Ascending aorta (tissue), 2 donors: ENCODE measurements at regions of chr4 and their contacts with region 1.

Region 1: DNA sequence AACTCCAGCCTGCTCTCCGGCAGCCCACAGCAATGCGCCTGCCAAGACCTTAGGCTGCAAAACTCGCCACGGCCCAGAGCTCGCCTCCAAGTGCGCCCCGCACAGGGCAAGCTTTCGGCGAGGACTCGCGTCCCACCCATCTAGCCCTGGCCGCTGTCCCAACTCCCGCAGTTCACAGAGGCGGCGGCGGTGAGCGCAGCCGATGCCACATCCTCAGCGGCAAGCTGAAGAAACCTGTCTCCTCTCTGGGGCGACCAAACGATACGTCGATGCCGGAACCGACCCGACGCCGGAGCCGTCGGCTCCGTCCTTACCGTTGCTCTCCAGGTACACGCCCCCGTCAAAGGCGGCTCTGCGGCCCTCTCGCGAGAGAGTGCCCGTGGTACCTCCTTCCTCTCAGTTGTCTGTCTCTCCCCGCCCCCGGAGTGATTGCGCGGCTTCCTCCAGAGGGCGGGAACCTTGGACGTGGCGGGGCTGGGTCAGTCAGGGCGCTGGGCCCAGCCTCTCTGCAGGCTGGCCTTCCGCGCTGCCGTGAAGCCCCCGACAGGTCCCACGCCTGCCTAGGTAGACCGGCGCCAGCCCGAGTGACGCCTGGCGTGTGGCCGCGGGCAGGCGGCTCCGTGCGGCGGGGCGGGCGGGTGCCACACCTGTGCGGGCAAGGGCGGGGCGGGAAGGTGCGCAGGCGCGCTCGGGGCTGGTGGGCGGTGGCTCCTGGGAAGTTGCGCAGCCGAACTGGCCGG is 380 bp upstream of the RAB33B start:
- DNase-seq: peak; percentile 95 to 99
- H3K4me3 ChIP-seq: peak overlapping the region; percentile 92 to 93
- H3K27ac ChIP-seq: peak overlapping the region; percentile 94 to 98
- H3K4me1 ChIP-seq: peaks cover 5 to 21% of the 10 kb centered on the region in 2 donors
- H3K27me3 ChIP-seq: no peaks in the 10 kb centered on the region
- CTCF ChIP-seq: peak in 2 of 3 experiments; percentile 4 to 28

Region 2: GRCh38 chr4:139015269-139015947 is 438.1 kb before region 1 on chr4 and contains the start of gene NOCT:
- intact Hi-C with region 1: loop called (anchors 5 kb)
- DNase-seq: peak; percentile 67 to 92
- H3K4me3 ChIP-seq: peak within 1 kb of the TSS; percentile 80 to 81
- H3K27ac ChIP-seq: peak within 1 kb of the TSS; percentile 83 to 96
- H3K4me1 ChIP-seq: peaks cover 0 to 8% of the 10 kb centered on the region in 2 donors
- H3K27me3 ChIP-seq: no peaks in the 10 kb centered on the region
- CTCF ChIP-seq: peak; percentile 13 to 32 (median 24)
- total RNA-seq, gene NOCT: 9.9 TPM

Region 3: GRCh38 chr4:139253713-139254112 is 199.8 kb before region 1 on chr4:
- intact Hi-C with region 1: no loop called
- DNase-seq: no peak
- H3K4me3 ChIP-seq: no peak overlapping the region
- H3K27ac ChIP-seq: no peak overlapping the region
- H3K4me1 ChIP-seq: peaks cover 2 to 4% of the 10 kb centered on the region in 2 donors
- H3K27me3 ChIP-seq: no peaks in the 10 kb centered on the region
- CTCF ChIP-seq: no peak

Region 4: GRCh38 chr4:139301113-139301820 is 152.3 kb before region 1 on chr4 and contains the start of gene NAA15:
- intact Hi-C with region 1: loop called (anchors 2 kb)
- DNase-seq: peak; percentile 93 to 99
- H3K4me3 ChIP-seq: peak within 1 kb of the TSS; percentile 78 to 99
- H3K27ac ChIP-seq: peak within 1 kb of the TSS; percentile 92 to 95
- H3K4me1 ChIP-seq: peaks cover 3 to 34% of the 10 kb centered on the region in 2 donors
- H3K27me3 ChIP-seq: no peaks in the 10 kb centered on the region
- CTCF ChIP-seq: no peak
- total RNA-seq, gene NAA15: 6.4 TPM

Region 5: GRCh38 chr4:139530833-139531427 is 77.4 kb after region 1 on chr4:
- intact Hi-C with region 1: loop called (anchors 5 kb)
- DNase-seq: no peak
- H3K4me3 ChIP-seq: no peak overlapping the region
- H3K27ac ChIP-seq: no peak overlapping the region
- H3K4me1 ChIP-seq: peaks cover 0 to 4% of the 10 kb centered on the region in 2 donors
- H3K27me3 ChIP-seq: no peaks in the 10 kb centered on the region
- CTCF ChIP-seq: peak; percentile 13 to 61 (median 49)

Region 6: DNA sequence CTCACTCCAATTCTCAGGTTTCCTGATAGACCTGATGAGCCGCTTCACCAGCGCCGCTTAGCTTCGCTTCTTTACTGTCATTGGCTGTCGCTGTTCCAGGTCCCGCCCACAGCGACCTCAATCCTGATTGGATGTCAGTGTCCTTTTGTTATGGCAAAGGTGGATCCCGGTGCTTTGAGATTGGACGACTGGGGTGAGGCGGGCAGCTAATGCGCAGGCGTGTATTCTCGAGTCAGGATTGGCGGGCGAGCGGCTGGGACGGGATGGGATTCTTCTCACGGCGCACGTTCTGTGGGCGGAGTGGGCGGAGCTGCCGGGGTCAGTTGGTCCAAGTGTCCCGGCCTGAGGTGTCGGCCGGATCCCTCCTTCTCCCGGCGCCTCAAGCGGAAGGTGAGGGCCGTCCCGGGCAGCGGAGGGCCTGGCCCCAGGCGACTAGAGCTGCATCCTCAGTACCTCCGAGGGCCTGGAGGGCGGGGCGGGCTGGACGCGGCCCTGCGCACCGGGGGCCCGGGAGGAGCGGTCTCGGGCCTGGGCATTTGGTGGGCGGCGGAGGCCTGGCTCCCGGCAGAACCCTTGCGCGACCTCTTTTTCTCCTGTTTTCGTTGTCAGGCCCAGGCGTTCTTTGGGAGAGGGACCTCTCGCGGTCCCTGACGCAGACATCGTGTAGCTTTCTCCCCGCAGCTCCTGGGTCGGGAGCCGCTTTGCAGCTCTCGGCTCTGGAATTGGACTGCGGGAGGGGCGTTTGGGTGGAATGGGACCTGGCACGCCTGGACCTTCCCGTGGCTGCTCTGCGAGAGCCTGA is 920.0 kb after region 1 on chr4 and contains the start of gene SCOC:
- intact Hi-C with region 1: loop called (anchors 5 kb)
- DNase-seq: peak; percentile 99 to 100
- H3K4me3 ChIP-seq: peak within 1 kb of the TSS; percentile 93 to 99
- H3K27ac ChIP-seq: peak within 1 kb of the TSS; percentile 92 to 94
- H3K4me1 ChIP-seq: peaks cover 8 to 15% of the 10 kb centered on the region in 2 donors
- H3K27me3 ChIP-seq: no peaks in the 10 kb centered on the region
- CTCF ChIP-seq: no peak
- total RNA-seq, gene SCOC: 7.2 TPM

Region 7: GRCh38 chr4:140971077-140971792 is 1517.7 kb after region 1 on chr4:
- intact Hi-C with region 1: no loop called
- DNase-seq: no peak
- H3K4me3 ChIP-seq: no peak overlapping the region
- H3K27ac ChIP-seq: no peak overlapping the region
- H3K4me1 ChIP-seq: peaks cover 0 to 3% of the 10 kb centered on the region in 2 donors
- H3K27me3 ChIP-seq: no peaks in the 10 kb centered on the region
- CTCF ChIP-seq: no peak